HAP-1 (cell line): ENCODE measurements at regions of chr6 and their contacts with region 1.

Region 1: DNA sequence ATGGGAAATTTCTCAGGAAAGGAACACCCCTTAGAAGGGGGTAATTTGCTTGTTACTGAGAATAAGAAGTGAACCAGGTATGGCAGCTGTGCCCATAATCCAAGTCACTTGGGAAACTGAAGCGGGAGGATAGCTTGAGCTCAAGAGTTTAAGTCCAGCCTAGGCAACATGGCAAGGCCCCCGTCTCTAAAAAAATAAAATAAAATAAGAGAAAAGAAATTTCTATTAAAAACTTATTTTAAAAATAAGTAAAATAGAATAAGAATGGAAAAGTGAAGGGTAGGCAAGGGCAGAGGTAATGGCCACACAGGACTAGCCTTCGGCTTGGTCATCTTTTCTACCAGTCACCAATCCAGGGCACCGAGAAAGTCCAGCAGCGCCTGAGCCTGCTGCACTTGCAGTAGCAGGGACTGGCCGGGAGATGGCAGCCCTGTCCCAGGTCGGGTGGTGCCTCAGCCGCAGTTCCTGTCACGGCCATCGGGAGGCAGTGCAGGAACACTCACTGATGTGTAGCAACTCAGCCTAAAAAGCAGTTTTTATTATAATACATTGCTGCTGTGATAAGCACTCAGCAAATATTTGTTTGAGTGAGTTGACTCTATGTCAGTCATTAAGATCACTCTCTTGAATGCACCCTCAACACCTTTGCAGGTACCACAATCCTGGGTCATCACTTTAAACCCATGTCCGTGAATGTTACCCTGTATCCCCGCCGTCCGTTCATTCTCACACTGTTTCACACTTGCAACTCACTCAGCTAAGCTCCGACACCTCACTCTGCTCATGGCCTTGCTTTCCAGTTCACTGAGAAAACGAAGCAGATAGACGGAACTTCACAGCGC is 23.2 kb upstream of the GCM1 start:
- DNase-seq: peak; percentile 68 to 92
- H3K4me3 ChIP-seq: no peak overlapping the region
- H3K4me1 ChIP-seq: no peaks in the 10 kb centered on the region
- H3K27me3 ChIP-seq: no peaks in the 10 kb centered on the region

Region 2: GRCh38 chr6:52815167-52816092 is 356.4 kb before region 1 on chr6:
- in situ Hi-C with region 1: no loop called
- DNase-seq: peak; percentile 48 to 78
- H3K4me3 ChIP-seq: no peak overlapping the region
- H3K4me1 ChIP-seq: no peaks in the 10 kb centered on the region
- H3K27me3 ChIP-seq: no peaks in the 10 kb centered on the region

Region 3: GRCh38 chr6:53437557-53438202 is 265.9 kb after region 1 on chr6:
- in situ Hi-C with region 1: loop called (anchors 5 kb)
- DNase-seq: peak; percentile 55 to 71
- H3K4me3 ChIP-seq: no peak overlapping the region
- H3K4me1 ChIP-seq: peaks cover 11% of the 10 kb centered on the region
- H3K27me3 ChIP-seq: peaks cover 18% of the 10 kb centered on the region

Region 4: GRCh38 chr6:53484476-53485280 is 312.9 kb after region 1 on chr6:
- in situ Hi-C with region 1: loop called (anchors 5 kb)
- DNase-seq: peak; percentile 73 to 84
- H3K4me3 ChIP-seq: no peak overlapping the region
- H3K4me1 ChIP-seq: peaks cover 10% of the 10 kb centered on the region
- H3K27me3 ChIP-seq: peaks cover 4% of the 10 kb centered on the region; the same call in 1 of the 2 replicates

Region 5: DNA sequence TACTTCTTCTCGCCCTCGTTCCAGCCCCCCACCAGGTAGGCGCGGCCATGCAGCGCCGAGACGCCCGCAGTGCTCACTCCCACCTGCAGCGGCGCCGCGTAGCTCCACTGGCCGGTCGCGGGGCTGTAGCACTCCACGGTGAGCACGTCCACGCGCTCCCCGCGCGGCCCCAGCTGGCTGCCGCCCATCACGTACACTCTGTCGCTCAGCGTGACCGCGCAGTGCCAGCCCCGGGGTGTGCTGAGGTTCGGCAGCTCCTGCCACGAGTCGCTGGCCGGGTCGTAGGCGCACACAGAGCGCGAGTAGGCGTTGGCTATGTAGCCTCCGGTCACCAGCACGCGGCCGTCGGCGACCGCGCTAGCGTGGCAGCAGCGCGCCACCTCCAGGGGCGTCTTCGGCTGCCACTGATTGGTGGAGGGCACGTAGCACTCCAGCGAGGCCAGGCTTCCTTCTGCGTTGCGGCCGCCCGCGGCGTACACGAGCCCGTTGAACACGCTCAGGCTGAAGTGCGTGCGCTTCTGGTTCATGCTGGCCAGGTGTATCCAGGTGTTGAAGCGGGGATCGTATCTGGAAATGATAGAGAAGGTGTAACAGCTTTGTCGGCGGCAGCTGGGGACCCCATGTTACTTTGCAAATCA is 480.1 kb after region 1 on chr6:
- in situ Hi-C with region 1: loop called (anchors 25 kb)
- DNase-seq: peak; percentile 78 to 85
- H3K4me3 ChIP-seq: peak overlapping the region; percentile 37
- H3K4me1 ChIP-seq: peaks cover 3% of the 10 kb centered on the region; the same call in 1 of the 2 replicates
- H3K27me3 ChIP-seq: no peaks in the 10 kb centered on the region